Left ventricle myocardium superior (tissue), 1 donor: ENCODE measurements at regions of chr9 and their contacts with region 1.

Region 1: GRCh38 chr9:36102742-36103495 is 33.6 kb upstream of the GLIPR2 start:
- DNase-seq: peak; percentile 88
- ATAC-seq: peak; percentile 94

Region 2: GRCh38 chr9:35675732-35676392 is 427.1 kb before region 1 on chr9:
- intact Hi-C with region 1: no loop called
- DNase-seq: peak; percentile 71
- ATAC-seq: peak; percentile 51

Region 3: DNA sequence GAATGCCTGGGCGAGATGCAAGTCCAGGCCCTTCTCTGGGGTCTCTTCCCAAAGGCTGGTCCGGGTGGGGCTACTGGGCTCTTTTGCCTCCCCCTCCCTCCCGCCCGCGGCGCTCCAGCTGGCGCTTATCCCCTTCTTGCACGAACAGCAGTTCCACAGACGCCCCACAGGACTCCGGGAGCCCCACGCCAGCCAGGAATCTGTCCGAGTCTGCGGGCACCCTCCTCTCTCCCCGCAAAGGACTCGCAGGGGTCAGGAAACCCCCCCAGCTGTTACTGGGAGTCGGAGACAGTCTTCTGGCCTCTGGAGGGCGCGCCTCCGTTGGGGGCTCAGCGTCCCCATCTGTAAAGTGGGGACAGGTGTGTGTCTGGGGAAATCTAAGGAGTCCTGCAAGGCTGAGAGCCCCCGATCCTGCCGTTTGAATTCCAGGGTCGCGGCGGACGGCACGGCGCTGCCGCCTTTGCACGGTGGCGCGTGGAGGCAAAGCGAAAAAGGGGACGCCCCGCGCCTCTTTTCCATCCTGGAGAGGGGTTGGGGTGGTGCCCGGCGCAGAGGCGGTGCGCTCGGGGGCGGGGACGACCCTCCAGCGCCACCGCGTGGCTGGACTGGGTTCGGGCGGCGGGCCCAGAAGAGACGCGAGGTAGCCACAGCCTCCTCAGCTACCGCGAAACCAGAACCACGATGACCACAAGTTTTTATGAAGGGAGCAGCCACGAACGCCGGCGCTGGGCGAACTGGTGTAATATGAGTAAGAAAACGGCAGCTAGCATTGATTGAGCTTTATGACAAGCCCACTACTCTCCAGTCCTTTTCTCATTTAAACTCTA is 63.4 kb after region 1 on chr9:
- intact Hi-C with region 1: loop called (anchors 5 kb)
- DNase-seq: peak; percentile 90
- ATAC-seq: peak; percentile 93